ENCODE measurements at regions of chr10 and their contacts with region 1.

Region 1: GRCh38 chr10:14954001-14954770 is at the start of gene DCLRE1C:
- DNase-seq: peak; percentile 98
- H3K4me3 ChIP-seq: peak within 1 kb of the TSS; percentile 85
- H3K4me3 Mint-ChIP-seq: peak within 1 kb of the TSS; percentile 87
- H3K27ac Mint-ChIP-seq: peak within 1 kb of the TSS; percentile 99
- H3K4me1 ChIP-seq: peaks cover 4% of the 10 kb centered on the region; the same call in 1 of the 2 replicates
- H3K4me1 Mint-ChIP-seq: peaks cover 6% of the 10 kb centered on the region
- H3K27me3 ChIP-seq: no peaks in the 10 kb centered on the region
- H3K27me3 Mint-ChIP-seq: no peaks in the 10 kb centered on the region
- CTCF ChIP-seq: no peak
- total RNA-seq, gene DCLRE1C: 23.7 and 25.8 TPM in 2 replicates

Region 2: DNA sequence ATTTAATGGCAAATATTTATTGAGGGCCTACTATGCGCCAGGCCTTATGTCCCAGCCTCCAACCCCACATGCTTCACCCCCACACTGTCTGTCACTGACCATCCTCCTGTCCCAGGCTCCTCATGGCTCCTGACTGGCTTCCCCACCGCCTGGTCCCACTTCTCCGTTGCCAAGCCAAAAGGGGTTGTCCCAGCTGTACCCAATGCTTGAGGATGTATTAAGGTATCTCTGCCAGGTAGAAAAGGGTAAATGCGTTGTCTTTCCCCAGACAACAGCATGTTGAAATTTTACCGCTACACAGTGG is 454.6 kb before region 1 on chr10:
- CTCF ChIA-PET with region 1: no interaction called
- POLR2A ChIA-PET with region 1: no interaction called
- intact Hi-C with region 1: loop called (anchors 1 kb)
- DNase-seq: no peak
- H3K4me3 ChIP-seq: no peak overlapping the region
- H3K4me3 Mint-ChIP-seq: no peak overlapping the region
- H3K27ac Mint-ChIP-seq: no peak overlapping the region
- H3K4me1 ChIP-seq: no peaks in the 10 kb centered on the region; the same call in 1 of the 2 replicates
- H3K4me1 Mint-ChIP-seq: peaks cover 15% of the 10 kb centered on the region
- H3K27me3 ChIP-seq: no peaks in the 10 kb centered on the region
- H3K27me3 Mint-ChIP-seq: no peaks in the 10 kb centered on the region
- CTCF ChIP-seq: no peak

Region 3: DNA sequence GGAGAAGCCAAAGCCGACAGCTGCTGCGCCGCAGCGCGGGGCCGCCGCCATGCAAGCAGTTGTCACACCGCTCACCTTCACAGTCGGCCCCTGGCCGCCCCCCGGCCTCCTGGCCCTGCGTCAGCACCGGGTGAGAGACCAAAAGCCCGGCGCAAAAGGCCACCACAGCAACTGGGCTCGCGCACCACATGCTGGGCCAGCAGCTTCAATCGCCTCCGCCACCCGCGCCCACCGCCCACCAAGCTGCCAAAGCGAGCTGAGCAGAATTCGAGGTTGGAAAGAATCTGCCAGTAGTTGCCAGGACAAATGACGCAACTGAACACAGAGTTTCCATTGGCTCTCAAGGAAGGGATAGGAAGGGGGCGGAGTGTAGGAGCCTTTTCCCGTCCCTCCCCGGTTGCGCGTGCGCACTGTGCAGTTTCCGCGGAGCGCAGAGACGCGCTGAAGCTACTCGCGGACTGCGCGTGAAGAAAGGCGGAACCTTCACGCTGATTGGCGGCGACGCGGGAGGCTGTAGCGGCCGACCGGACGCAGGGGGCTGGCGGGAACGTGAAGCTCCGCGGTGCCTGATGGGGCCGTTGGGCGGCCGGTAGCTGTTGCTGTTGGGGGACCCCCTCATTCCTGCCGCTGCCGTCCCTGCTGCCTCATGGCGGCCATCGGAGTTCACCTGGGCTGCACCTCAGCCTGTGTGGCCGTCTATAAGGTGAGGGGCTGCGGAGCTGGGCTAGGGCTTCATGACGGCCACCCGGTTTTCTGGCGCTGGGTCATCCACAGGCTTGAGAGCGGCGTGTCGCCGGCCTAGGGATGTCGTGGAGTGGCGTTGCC is 116.2 kb before region 1 on chr10 and contains the starts of genes CDNF, HSPA14 and MSANTD7:
- CTCF ChIA-PET with region 1: interaction called, 6 read pairs
- POLR2A ChIA-PET with region 1: interaction called, 23 read pairs
- intact Hi-C with region 1: loop called (anchors 2 kb)
- DNase-seq: peak; percentile 100
- H3K4me3 ChIP-seq: peak within 1 kb of the TSS; percentile 91
- H3K4me3 Mint-ChIP-seq: peak within 1 kb of the TSS; percentile 70
- H3K27ac Mint-ChIP-seq: peak within 1 kb of the TSS; percentile 91
- H3K4me1 ChIP-seq: no peaks in the 10 kb centered on the region; the same call in 1 of the 2 replicates
- H3K4me1 Mint-ChIP-seq: peaks cover 15% of the 10 kb centered on the region
- H3K27me3 ChIP-seq: no peaks in the 10 kb centered on the region
- H3K27me3 Mint-ChIP-seq: no peaks in the 10 kb centered on the region
- CTCF ChIP-seq: no peak
- total RNA-seq, gene CDNF: 3.4 and 3.9 TPM in 2 replicates
- total RNA-seq, gene HSPA14: 36.9 and 39.3 TPM in 2 replicates
- total RNA-seq, gene MSANTD7: 30.0 and 32.8 TPM in 2 replicates

Region 4: GRCh38 chr10:14971867-14972448 is 17.8 kb after region 1 on chr10:
- CTCF ChIA-PET with region 1: interaction called, 7 read pairs
- POLR2A ChIA-PET with region 1: interaction called, 3 read pairs
- intact Hi-C with region 1: loop called (anchors 1 kb)
- DNase-seq: peak; percentile 63 to 77
- H3K4me3 ChIP-seq: no peak overlapping the region
- H3K4me3 Mint-ChIP-seq: no peak overlapping the region
- H3K27ac Mint-ChIP-seq: no peak overlapping the region
- H3K4me1 ChIP-seq: no peaks in the 10 kb centered on the region
- H3K4me1 Mint-ChIP-seq: no peaks in the 10 kb centered on the region
- H3K27me3 ChIP-seq: no peaks in the 10 kb centered on the region
- H3K27me3 Mint-ChIP-seq: no peaks in the 10 kb centered on the region
- CTCF ChIP-seq: peak; percentile 78 to 90

Region 5: GRCh38 chr10:15106352-15107013 is 152.3 kb after region 1 on chr10:
- CTCF ChIA-PET with region 1: interaction called, 12 read pairs
- POLR2A ChIA-PET with region 1: no interaction called
- intact Hi-C with region 1: loop called (anchors 1 kb)
- DNase-seq: peak; percentile 83 to 88
- H3K4me3 ChIP-seq: no peak overlapping the region
- H3K4me3 Mint-ChIP-seq: no peak overlapping the region
- H3K27ac Mint-ChIP-seq: no peak overlapping the region
- H3K4me1 ChIP-seq: 0 out of 2 replicates have a peak, but pooled peaks cover 7% of the 10 kb centered on the region
- H3K4me1 Mint-ChIP-seq: no peaks in the 10 kb centered on the region
- H3K27me3 ChIP-seq: no peaks in the 10 kb centered on the region
- H3K27me3 Mint-ChIP-seq: no peaks in the 10 kb centered on the region
- CTCF ChIP-seq: peak; percentile 94 to 97

Measured in Caco-2 (cell line).